Endothelial cell of umbilical vein (primary cell): ENCODE measurements at regions of chr19 and their contacts with region 1.

Region 1: GRCh38 chr19:41263850-41264580 is at the start of gene HNRNPUL1:
- DNase-seq: peak; percentile 100
- H3K4me3 ChIP-seq: peak within 1 kb of the TSS; percentile 85 to 91 (median 89)
- H3K27ac ChIP-seq: peak within 1 kb of the TSS; percentile 90
- H3K4me1 ChIP-seq: peaks cover 18% of the 10 kb centered on the region
- H3K27me3 ChIP-seq: no peaks in the 10 kb centered on the region
- CTCF ChIP-seq: peak; percentile 5 to 46
- POLR2A ChIP-seq: peak; percentile 10
- total RNA-seq, gene HNRNPUL1: 261 TPM in 2 replicates

Region 2: GRCh38 chr19:40974633-40975037 is 289.4 kb before region 1 on chr19:
- CTCF ChIA-PET with region 1: no interaction called
- POLR2A ChIA-PET with region 1: no interaction called
- dilution Hi-C with region 1: no loop called
- intact Hi-C with region 1: loop called (anchors 2 kb)
- DNase-seq: peak; percentile 61
- H3K4me3 ChIP-seq: no peak overlapping the region
- H3K27ac ChIP-seq: no peak overlapping the region
- H3K4me1 ChIP-seq: no peaks in the 10 kb centered on the region
- H3K27me3 ChIP-seq: peaks cover 0 to 4% of the 10 kb centered on the region in 2 experiments
- CTCF ChIP-seq: peak; percentile 71 to 86
- POLR2A ChIP-seq: no peak

Region 3: GRCh38 chr19:41144403-41144802 is 119.6 kb before region 1 on chr19:
- CTCF ChIA-PET with region 1: interaction called, 5 read pairs
- POLR2A ChIA-PET with region 1: no interaction called
- dilution Hi-C with region 1: no loop called
- intact Hi-C with region 1: loop called (anchors 1 kb)
- DNase-seq: peak; percentile 79
- H3K4me3 ChIP-seq: no peak overlapping the region
- H3K27ac ChIP-seq: no peak overlapping the region
- H3K4me1 ChIP-seq: no peaks in the 10 kb centered on the region
- H3K27me3 ChIP-seq: no peaks in the 10 kb centered on the region
- CTCF ChIP-seq: peak; percentile 77 to 86
- POLR2A ChIP-seq: no peak

Region 4: DNA sequence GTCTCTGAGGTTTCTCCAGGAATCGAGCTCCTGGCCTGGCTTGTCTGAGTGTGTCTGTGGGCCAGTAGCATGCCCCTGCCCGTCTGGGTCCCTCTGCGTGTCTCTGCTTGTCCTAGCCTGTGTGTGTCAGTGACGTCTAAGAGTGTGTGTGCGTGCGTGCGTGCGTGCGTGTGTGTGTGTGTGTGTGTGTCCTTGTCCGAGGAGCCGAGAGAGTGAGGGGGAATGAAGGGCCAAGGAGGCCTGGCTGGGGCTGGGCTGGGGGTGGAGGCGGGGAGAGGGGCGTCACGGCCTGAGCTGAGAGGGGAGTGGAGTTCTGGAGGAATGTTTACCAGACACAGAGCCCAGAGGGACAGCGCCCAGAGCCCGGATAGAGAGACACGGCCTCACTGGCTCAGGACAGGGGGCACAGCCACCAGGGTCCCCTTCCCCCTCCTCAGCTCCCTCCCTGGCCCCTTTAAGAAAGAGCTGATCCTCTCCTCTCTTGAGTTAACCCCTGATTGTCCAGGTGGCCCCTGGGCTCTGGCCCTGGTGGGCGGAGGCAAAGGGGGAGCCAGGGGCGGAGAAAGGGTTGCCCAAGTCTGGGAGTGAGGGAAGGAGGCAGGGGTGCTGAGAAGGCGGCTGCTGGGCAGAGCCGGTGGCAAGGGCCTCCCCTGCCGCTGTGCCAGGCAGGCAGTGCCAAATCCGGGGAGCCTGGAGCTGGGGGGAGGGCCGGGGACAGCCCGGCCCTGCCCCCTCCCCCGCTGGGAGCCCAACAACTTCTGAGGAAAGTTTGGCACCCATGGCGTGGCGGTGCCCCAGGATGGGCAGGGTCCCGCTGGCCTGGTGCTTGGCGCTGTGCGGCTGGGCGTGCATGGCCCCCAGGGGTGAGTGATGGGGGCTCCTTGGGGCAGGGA is 45.2 kb before region 1 on chr19 and contains the start of gene AXL:
- CTCF ChIA-PET with region 1: interaction called, 29 read pairs
- POLR2A ChIA-PET with region 1: interaction called, 3 read pairs
- dilution Hi-C with region 1: no loop called
- intact Hi-C with region 1: loop called (anchors 1 kb)
- DNase-seq: peak; percentile 73
- H3K4me3 ChIP-seq: peak within 1 kb of the TSS; percentile 59 to 96 (median 85)
- H3K27ac ChIP-seq: peak within 1 kb of the TSS; percentile 73
- H3K4me1 ChIP-seq: peaks cover 34% of the 10 kb centered on the region
- H3K27me3 ChIP-seq: no peaks in the 10 kb centered on the region
- CTCF ChIP-seq: no peak
- POLR2A ChIP-seq: peak; percentile 77
- total RNA-seq, gene AXL: 151 and 172 TPM in 2 replicates

Region 5: GRCh38 chr19:41248895-41249294 is 15.1 kb before region 1 on chr19:
- CTCF ChIA-PET with region 1: interaction called, 19 read pairs
- POLR2A ChIA-PET with region 1: no interaction called
- dilution Hi-C with region 1: no loop called
- intact Hi-C with region 1: no loop called
- DNase-seq: no peak
- H3K4me3 ChIP-seq: no peak overlapping the region
- H3K27ac ChIP-seq: no peak overlapping the region
- H3K4me1 ChIP-seq: no peaks in the 10 kb centered on the region
- H3K27me3 ChIP-seq: no peaks in the 10 kb centered on the region
- CTCF ChIP-seq: no peak
- POLR2A ChIP-seq: no peak

Region 6: DNA sequence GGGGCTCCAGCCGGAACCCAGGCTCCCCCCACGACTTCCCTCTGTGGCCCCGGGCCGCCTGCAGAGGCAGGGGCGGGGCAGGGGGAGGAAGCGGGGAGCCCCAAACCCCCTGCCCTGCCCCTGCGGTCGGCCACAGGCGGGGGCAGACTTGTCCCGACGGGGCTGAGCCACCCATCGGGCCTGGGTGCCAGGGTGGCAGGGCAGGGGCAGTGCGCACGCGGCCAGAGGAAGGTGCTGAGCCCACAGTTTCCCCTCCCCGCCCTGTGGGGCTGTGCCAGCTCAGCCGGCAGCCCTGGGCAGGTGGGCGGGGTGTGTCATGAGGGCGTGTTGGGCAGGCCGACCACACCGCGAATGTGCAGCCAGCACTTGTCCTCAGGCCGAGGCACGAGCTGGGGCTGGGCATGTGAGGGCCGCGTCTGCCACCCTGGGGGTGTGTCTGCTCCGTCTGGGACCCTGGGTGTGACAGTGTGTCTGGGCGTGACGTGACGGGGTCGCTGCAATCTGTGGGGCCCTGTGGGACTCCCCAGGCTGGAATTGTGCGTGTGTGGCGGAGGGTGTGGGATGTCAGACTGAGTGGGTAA is 63.7 kb after region 1 on chr19:
- CTCF ChIA-PET with region 1: no interaction called
- POLR2A ChIA-PET with region 1: no interaction called
- dilution Hi-C with region 1: no loop called
- intact Hi-C with region 1: no loop called
- DNase-seq: peak; percentile 88
- H3K4me3 ChIP-seq: peak overlapping the region in 1 of 3 experiments; percentile 1
- H3K27ac ChIP-seq: peak overlapping the region; percentile 100
- H3K4me1 ChIP-seq: peaks cover 61% of the 10 kb centered on the region
- H3K27me3 ChIP-seq: no peaks in the 10 kb centered on the region
- CTCF ChIP-seq: no peak
- POLR2A ChIP-seq: no peak

Region 7: GRCh38 chr19:41353466-41354342 is 89.7 kb after region 1 on chr19 and contains the start of gene TGFB1:
- CTCF ChIA-PET with region 1: interaction called, 6 read pairs
- POLR2A ChIA-PET with region 1: no interaction called
- dilution Hi-C with region 1: no loop called
- intact Hi-C with region 1: loop called (anchors 2 kb)
- DNase-seq: peak; percentile 81
- H3K4me3 ChIP-seq: peak within 1 kb of the TSS; percentile 75 to 99 (median 90)
- H3K27ac ChIP-seq: peak within 1 kb of the TSS; percentile 70
- H3K4me1 ChIP-seq: peaks cover 12% of the 10 kb centered on the region
- H3K27me3 ChIP-seq: no peaks in the 10 kb centered on the region
- CTCF ChIP-seq: peak; percentile 92 to 96
- POLR2A ChIP-seq: peak; percentile 88
- total RNA-seq, gene TGFB1: 250 and 294 TPM in 2 replicates